Posterior vena cava (tissue), 2 donors: ENCODE measurements at regions of chr1 and their contacts with region 1.

Region 1: GRCh38 chr1:54499360-54500106 is 48.5 kb upstream of the ACOT11 start:
- DNase-seq: no peak

Region 2: DNA sequence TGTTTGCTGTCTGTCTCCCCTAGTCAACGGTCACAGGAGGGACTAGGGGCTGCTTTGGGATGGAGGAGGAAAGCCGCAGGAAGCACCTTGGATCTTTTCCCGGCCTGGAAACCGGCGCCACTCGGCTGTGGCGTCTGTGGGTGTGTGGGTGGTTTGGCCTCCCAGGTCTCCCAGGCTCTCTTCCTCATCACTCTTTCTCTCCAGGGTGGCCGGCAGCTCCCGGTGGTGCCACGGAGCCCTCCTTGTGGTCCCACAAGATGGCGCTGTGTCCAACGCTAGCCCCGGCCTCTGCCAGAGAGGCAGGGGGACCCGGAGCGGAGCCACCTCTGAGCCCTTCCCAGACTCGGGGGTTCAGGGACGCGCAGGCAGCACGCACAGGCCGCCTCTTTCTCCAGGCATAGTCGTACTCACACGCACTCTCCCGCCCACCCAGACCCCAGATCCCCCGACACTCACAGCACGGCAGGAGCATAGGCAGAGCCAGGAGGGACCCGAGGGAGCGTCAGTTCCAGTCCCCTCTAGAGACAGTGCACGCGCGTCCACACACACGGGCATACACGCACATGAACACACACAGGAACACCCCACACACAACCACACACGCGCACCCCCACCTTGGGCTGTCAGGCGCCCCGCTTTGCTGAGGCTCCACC is 377.9 kb before region 1 on chr1:
- intact Hi-C with region 1: loop called in 1 of 2 experiments (anchors 10 kb)
- DNase-seq: peak; percentile 92

Region 3: GRCh38 chr1:54810100-54810942 is 310.8 kb after region 1 on chr1:
- intact Hi-C with region 1: loop called in 1 of 2 experiments (anchors 10 kb)
- DNase-seq: peak; percentile 88